Activated CD8-positive, alpha-beta memory T cell treated with anti-CD3 and anti-CD28 coated beads, Interleukin-2, amount 10 ng/mL, durations not matched to agents 7 days and 5 days (primary cell): ENCODE measurements at regions of chr6 and their contacts with region 1.

Region 1: GRCh38 chr6:16761471-16762267 is 409 bp upstream of the ATXN1 start:
- DNase-seq: peak; percentile 95
- ATAC-seq: peak; percentile 68
- H3K4me3 Mint-ChIP-seq: peak overlapping the region; percentile 100
- H3K27ac Mint-ChIP-seq: peak overlapping the region; percentile 99
- H3K4me1 Mint-ChIP-seq: peaks cover 59% of the 10 kb centered on the region
- H3K27me3 Mint-ChIP-seq: no peaks in the 10 kb centered on the region

Region 2: DNA sequence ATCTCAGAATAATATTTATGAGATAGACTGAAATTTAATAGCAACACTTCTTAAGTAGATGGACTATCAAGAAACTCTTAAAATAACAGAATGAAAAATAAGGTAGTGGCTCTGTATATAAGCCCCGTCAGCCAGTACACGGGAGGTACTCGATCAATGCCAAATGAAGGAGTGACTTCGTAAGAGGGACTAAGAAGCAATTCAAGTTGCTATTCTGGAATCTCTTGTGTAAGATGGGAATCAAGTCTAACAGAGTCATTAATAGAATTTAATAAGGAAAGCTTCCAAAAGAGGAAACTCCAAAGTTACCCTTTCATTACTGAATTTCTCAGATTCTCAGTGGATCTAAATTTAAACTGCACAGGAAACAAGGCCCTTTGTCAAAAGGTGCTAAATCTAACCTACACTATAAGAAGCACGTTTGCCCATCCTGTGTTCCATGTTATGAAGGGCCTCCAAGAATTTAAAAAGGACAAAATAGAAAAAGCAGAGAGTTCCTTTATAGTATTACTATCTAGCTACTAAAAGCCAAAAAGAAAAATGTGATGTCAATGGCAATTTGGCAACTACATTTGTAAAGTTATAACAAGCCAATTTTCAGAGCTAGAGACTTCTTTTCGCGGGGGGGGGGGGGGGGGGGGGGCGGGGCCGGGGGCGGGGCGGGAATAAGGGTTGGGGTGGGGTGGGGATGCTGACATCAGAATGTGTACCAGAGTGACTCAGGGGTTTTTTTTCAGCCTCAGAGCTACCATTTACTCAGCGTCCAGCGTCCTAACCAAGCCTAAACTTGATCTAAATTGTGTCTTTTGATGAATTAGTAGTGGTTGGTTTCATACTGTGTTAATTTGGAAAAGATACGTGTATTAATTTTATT is 322.7 kb before region 1 on chr6:
- CTCF ChIA-PET with region 1: interaction called, 23 read pairs
- DNase-seq: peak; percentile 61
- ATAC-seq: peak; percentile 29
- H3K4me3 Mint-ChIP-seq: peak overlapping the region; percentile 91
- H3K27ac Mint-ChIP-seq: peak overlapping the region; percentile 89
- H3K4me1 Mint-ChIP-seq: peaks cover 75% of the 10 kb centered on the region
- H3K27me3 Mint-ChIP-seq: no peaks in the 10 kb centered on the region

Region 3: GRCh38 chr6:16540804-16541752 is 220.6 kb before region 1 on chr6:
- CTCF ChIA-PET with region 1: no interaction called
- DNase-seq: no peak
- ATAC-seq: no peak
- H3K4me3 Mint-ChIP-seq: no peak overlapping the region
- H3K27ac Mint-ChIP-seq: no peak overlapping the region
- H3K4me1 Mint-ChIP-seq: peaks cover 19% of the 10 kb centered on the region
- H3K27me3 Mint-ChIP-seq: no peaks in the 10 kb centered on the region

Region 4: DNA sequence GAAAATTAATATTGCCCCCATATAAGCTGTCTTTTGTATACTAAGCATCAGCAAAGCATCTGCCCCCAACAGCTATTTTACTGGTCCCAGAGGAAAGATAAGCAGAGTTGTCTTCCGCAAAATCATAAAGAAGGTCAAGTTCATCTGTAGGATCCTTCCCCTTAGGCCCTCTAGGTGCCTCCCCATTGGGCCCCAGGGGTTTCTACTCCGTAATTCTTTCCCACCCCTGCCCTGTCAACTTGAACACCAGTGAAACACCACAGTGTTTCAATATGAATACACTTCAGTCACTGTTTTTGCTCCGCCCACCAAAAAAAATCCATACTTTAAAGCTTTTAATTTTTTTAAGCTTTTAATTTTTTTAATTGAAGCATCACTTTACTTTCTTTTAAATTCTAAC is 159.6 kb before region 1 on chr6:
- CTCF ChIA-PET with region 1: interaction called, 13 read pairs
- DNase-seq: peak; percentile 74
- ATAC-seq: peak; percentile 97
- H3K4me3 Mint-ChIP-seq: no peak overlapping the region
- H3K27ac Mint-ChIP-seq: peak overlapping the region; percentile 61
- H3K4me1 Mint-ChIP-seq: peaks cover 48% of the 10 kb centered on the region
- H3K27me3 Mint-ChIP-seq: no peaks in the 10 kb centered on the region

Region 5: GRCh38 chr6:16690608-16691198 is 71.0 kb before region 1 on chr6:
- CTCF ChIA-PET with region 1: interaction called, 10 read pairs
- DNase-seq: peak; percentile 74
- ATAC-seq: peak; percentile 54
- H3K4me3 Mint-ChIP-seq: peak overlapping the region; percentile 37
- H3K27ac Mint-ChIP-seq: peak overlapping the region; percentile 85
- H3K4me1 Mint-ChIP-seq: peaks cover 84% of the 10 kb centered on the region
- H3K27me3 Mint-ChIP-seq: no peaks in the 10 kb centered on the region

Region 6: GRCh38 chr6:16731478-16732051 is 30.1 kb before region 1 on chr6:
- CTCF ChIA-PET with region 1: interaction called, 45 read pairs
- DNase-seq: peak; percentile 76
- ATAC-seq: peak; percentile 85
- H3K4me3 Mint-ChIP-seq: peak overlapping the region; percentile 74
- H3K27ac Mint-ChIP-seq: peak overlapping the region; percentile 94
- H3K4me1 Mint-ChIP-seq: peaks cover 70% of the 10 kb centered on the region
- H3K27me3 Mint-ChIP-seq: no peaks in the 10 kb centered on the region